AG04450 (cell line): ENCODE measurements at regions of chr2 and their contacts with region 1.

Region 1: GRCh38 chr2:102050854-102051391 is 59.2 kb downstream of the IL1R2 start:
- DNase-seq: no peak
- H3K4me3 ChIP-seq: no peak overlapping the region
- H3K27ac ChIP-seq: peak overlapping the region; percentile 70
- H3K27me3 ChIP-seq: no peaks in the 10 kb centered on the region
- CTCF ChIP-seq: no peak

Region 2: DNA sequence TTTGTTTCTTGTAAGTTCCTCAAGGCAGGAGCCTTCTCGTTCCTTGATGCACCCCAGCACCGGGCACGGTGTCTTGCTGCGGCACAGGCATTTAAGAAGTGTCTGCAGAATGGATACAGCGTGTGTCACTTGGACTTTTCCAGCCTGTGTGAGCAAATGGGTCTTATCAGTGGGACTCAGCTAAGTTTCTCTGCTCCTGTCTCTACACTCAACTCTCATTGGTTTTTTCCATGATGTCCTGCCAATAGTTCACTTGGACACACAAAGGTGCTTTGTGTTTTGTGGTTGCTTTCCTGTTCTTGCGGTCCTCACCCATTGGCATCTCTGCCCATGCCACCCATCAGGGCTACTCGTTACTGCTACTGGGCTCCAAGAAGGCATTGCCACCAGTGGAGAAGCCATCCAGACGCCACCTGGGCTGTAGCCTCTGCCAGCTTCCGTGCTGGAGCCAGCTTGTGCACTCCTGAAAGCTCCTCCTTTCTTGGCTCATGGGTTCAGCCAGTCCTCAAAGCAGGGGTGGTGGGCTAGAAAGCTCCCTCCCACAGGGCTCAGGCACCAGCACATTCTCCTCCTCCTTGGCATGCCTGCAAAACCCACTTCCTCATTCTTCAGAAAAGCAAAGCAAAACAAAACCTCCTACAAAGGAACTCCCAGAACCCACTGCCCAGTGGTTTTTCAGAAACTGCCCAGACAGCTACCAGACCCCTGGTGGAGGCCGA is 17.7 kb before region 1 on chr2:
- CTCF ChIA-PET with region 1: interaction called, 4 read pairs
- POLR2A ChIA-PET with region 1: interaction called, 14 read pairs
- DNase-seq: peak; percentile 69
- H3K4me3 ChIP-seq: no peak overlapping the region
- H3K27ac ChIP-seq: peak overlapping the region; percentile 75
- H3K27me3 ChIP-seq: no peaks in the 10 kb centered on the region
- CTCF ChIP-seq: peak; percentile 47